ENCODE measurements at regions of chr17 and their contacts with region 1.

Region 1: GRCh38 chr17:37737081-37737480 is 7.8 kb downstream of the HNF1B start:
- DNase-seq: peak; percentile 41 to 73
- ATAC-seq: peak; percentile 38 to 52; a peak in 3 of 6 replicates
- H3K4me3 ChIP-seq: no peak overlapping the region
- H3K27ac ChIP-seq: peak overlapping the region in 1 of 2 experiments; percentile 37; a peak in 2 of 6 replicates
- H3K4me1 ChIP-seq: peaks cover 44% of the 10 kb centered on the region
- CTCF ChIP-seq: peak; percentile 65
- EP300 ChIP-seq: no peak
- POLR2A ChIP-seq: no peak
- RAD21 ChIP-seq: peak; percentile 63 to 73

Region 2: DNA sequence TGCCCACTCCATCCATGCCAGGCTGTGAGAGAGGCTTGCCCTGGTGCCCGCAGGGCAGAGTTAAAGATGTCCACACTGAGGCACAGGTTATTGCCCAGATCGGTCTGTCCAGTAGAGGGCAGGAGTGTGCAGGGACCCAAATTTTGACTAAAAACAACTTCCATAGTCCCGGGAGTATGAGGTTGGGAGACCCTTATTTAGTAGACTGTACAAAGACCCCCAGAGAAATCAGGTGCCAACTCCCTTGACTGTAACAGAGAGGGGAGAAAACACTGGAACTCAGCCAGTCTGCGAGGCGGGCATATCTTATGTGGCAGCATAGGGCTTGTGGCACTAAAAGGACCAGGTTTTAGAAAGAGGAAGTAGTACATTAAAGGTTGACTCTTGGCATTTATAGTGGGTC is 35.6 kb before region 1 on chr17:
- CTCF ChIA-PET with region 1: interaction called, 22 read pairs
- POLR2A ChIA-PET with region 1: no interaction called
- DNase-seq: peak; percentile 50 to 75
- ATAC-seq: peak; percentile 67 to 84; a peak in 5 of 6 replicates
- H3K4me3 ChIP-seq: no peak overlapping the region
- H3K27ac ChIP-seq: peak overlapping the region; percentile 72 to 78
- H3K4me1 ChIP-seq: peaks cover 48% of the 10 kb centered on the region
- CTCF ChIP-seq: peak; percentile 94
- EP300 ChIP-seq: no peak
- POLR2A ChIP-seq: no peak
- RAD21 ChIP-seq: peak; percentile 82 to 85

Region 3: GRCh38 chr17:37710344-37710886 is 26.7 kb before region 1 on chr17:
- CTCF ChIA-PET with region 1: interaction called, 46 read pairs
- POLR2A ChIA-PET with region 1: no interaction called
- DNase-seq: peak; percentile 72 to 87
- ATAC-seq: peak in 1 of 2 experiments; percentile 33; a peak in 3 of 6 replicates
- H3K4me3 ChIP-seq: no peak overlapping the region
- H3K27ac ChIP-seq: peak overlapping the region; percentile 89 to 95; a peak in 4 of 6 replicates
- H3K4me1 ChIP-seq: peaks cover 88% of the 10 kb centered on the region
- CTCF ChIP-seq: no peak
- EP300 ChIP-seq: no peak
- POLR2A ChIP-seq: no peak
- RAD21 ChIP-seq: no peak

Region 4: GRCh38 chr17:37717627-37718323 is 19.3 kb before region 1 on chr17:
- CTCF ChIA-PET with region 1: interaction called, 46 read pairs
- POLR2A ChIA-PET with region 1: interaction called, 4 read pairs
- DNase-seq: no peak
- ATAC-seq: no peak
- H3K4me3 ChIP-seq: peak overlapping the region; percentile 22
- H3K27ac ChIP-seq: peak overlapping the region; percentile 89 to 95
- H3K4me1 ChIP-seq: peaks cover 74% of the 10 kb centered on the region
- CTCF ChIP-seq: no peak
- EP300 ChIP-seq: no peak
- POLR2A ChIP-seq: no peak
- RAD21 ChIP-seq: no peak

Region 5: GRCh38 chr17:37725601-37726146 is 11.4 kb before region 1 on chr17:
- CTCF ChIA-PET with region 1: interaction called, 12 read pairs
- POLR2A ChIA-PET with region 1: no interaction called
- DNase-seq: no peak
- ATAC-seq: no peak
- H3K4me3 ChIP-seq: no peak overlapping the region
- H3K27ac ChIP-seq: peak overlapping the region in 1 of 2 experiments; percentile 28; a peak in 2 of 6 replicates
- H3K4me1 ChIP-seq: peaks cover 8% of the 10 kb centered on the region
- CTCF ChIP-seq: no peak
- EP300 ChIP-seq: no peak
- POLR2A ChIP-seq: no peak
- RAD21 ChIP-seq: no peak

Region 6: GRCh38 chr17:37752482-37752881 is 15.4 kb after region 1 on chr17:
- CTCF ChIA-PET with region 1: no interaction called
- POLR2A ChIA-PET with region 1: no interaction called
- DNase-seq: peak; percentile 80 to 85
- ATAC-seq: peak; percentile 91 to 92
- H3K4me3 ChIP-seq: no peak overlapping the region
- H3K27ac ChIP-seq: peak overlapping the region; percentile 65 to 78
- H3K4me1 ChIP-seq: peaks cover 39% of the 10 kb centered on the region
- CTCF ChIP-seq: no peak
- EP300 ChIP-seq: no peak
- POLR2A ChIP-seq: no peak
- RAD21 ChIP-seq: no peak